PC-9 (cell line): ENCODE measurements at regions of chr11 and their contacts with region 1.

Region 1: DNA sequence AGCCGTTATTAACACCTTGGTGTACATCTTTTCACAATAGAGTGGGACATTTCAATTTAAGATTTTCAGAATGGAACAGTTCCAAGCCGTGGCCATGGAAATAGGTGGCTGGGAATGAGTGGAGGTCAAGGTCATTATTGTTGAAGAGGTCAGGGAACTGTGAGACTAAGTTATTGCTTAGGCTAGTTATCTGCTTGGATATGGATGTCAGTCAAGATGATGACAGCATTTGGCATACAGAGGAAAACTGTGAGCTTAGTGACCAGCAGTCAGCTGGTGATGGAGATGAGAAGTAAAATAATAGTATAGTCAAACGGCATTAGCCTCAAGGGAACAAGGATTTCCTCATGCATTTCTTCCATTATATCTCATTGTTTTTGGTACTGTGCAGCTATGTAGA is 52.6 kb upstream of the RCE1 start:
- DNase-seq: no peak
- H3K4me3 ChIP-seq: no peak overlapping the region
- H3K27ac ChIP-seq: no peak overlapping the region
- H3K4me1 ChIP-seq: peaks cover 32% of the 10 kb centered on the region
- H3K27me3 ChIP-seq: no peaks in the 10 kb centered on the region
- CTCF ChIP-seq: no peak

Region 2: DNA sequence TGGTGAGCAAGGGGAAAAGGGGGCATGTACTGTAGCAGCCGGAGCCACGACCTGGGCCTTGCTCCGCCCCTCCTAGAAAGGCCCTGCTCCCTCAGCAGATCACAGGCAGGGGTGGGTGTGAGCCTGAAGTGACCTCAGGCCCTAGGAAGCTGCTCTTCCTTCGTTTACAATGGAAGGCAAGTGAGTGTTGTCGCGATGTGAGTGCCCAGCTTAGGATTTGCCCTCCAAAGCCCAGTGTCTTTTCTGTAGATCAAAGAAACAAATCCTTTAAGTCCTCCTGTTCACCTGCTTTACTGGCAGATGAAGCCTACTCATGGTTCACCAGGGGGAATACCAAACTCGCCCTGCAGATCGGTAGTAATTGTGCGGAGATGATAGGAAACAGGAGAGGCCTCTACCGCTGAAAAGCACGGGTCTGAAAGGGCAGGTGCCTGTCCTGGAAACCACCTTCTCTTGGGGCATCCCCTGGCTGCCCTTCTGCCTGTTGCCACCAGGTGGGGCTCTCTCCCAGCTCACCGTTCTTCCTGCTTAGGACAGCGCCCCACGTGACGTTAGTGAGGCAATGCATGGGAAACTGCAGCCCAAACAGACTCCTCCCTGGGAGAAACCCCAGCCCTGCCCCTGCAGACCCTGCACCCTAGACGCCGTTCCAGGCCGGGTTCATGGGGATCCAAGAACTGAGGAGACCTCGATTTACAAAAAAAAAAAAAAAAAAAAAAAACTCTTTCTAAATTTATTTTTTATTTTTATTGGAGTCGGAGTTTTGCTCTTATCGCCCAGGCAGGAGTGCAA is 568.1 kb before region 1 on chr11:
- CTCF ChIA-PET with region 1: no interaction called
- POLR2A ChIA-PET with region 1: no interaction called
- intact Hi-C with region 1: no loop called
- DNase-seq: peak; percentile 86 to 90
- H3K4me3 ChIP-seq: no peak overlapping the region
- H3K27ac ChIP-seq: no peak overlapping the region
- H3K4me1 ChIP-seq: no peaks in the 10 kb centered on the region; the same call in 1 of the 2 replicates
- H3K27me3 ChIP-seq: no peaks in the 10 kb centered on the region
- CTCF ChIP-seq: peak; percentile 98

Region 3: GRCh38 chr11:66694732-66695207 is 95.9 kb before region 1 on chr11:
- CTCF ChIA-PET with region 1: no interaction called
- POLR2A ChIA-PET with region 1: no interaction called
- intact Hi-C with region 1: no loop called
- DNase-seq: peak; percentile 94 to 96
- H3K4me3 ChIP-seq: no peak overlapping the region
- H3K27ac ChIP-seq: no peak overlapping the region
- H3K4me1 ChIP-seq: no peaks in the 10 kb centered on the region
- H3K27me3 ChIP-seq: no peaks in the 10 kb centered on the region
- CTCF ChIP-seq: peak; percentile 98

Region 4: DNA sequence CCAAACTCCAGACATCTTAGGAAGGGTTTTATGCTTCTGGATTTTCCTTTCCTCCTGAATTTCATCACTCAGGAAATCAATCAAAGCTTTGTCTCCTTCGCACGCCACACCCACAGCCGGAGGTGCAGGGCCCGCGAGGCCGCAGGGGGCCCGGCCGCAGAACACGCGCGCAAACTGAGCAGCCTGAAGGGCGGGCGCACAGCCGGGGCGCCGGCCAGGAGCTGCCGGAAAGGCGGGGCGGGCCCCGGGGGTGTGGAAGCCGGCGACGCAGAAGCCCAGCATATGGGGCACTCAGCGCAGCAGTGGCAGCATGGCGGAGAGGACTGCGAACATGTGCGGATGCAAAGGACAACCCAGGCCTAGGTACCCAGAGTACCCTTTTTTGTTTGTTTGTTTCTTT is 28.6 kb before region 1 on chr11:
- CTCF ChIA-PET with region 1: no interaction called
- POLR2A ChIA-PET with region 1: no interaction called
- intact Hi-C with region 1: loop called (anchors 5 kb)
- DNase-seq: no peak
- H3K4me3 ChIP-seq: no peak overlapping the region
- H3K27ac ChIP-seq: no peak overlapping the region
- H3K4me1 ChIP-seq: no peaks in the 10 kb centered on the region
- H3K27me3 ChIP-seq: no peaks in the 10 kb centered on the region
- CTCF ChIP-seq: no peak

Region 5: GRCh38 chr11:66842501-66842895 is 51.9 kb after region 1 on chr11:
- CTCF ChIA-PET with region 1: no interaction called
- POLR2A ChIA-PET with region 1: no interaction called
- intact Hi-C with region 1: no loop called
- DNase-seq: no peak
- H3K4me3 ChIP-seq: peak overlapping the region; percentile 94
- H3K27ac ChIP-seq: peak overlapping the region; percentile 67; the same call in 1 of the 2 replicates
- H3K4me1 ChIP-seq: peaks cover 46% of the 10 kb centered on the region
- H3K27me3 ChIP-seq: no peaks in the 10 kb centered on the region
- CTCF ChIP-seq: no peak

Region 6: DNA sequence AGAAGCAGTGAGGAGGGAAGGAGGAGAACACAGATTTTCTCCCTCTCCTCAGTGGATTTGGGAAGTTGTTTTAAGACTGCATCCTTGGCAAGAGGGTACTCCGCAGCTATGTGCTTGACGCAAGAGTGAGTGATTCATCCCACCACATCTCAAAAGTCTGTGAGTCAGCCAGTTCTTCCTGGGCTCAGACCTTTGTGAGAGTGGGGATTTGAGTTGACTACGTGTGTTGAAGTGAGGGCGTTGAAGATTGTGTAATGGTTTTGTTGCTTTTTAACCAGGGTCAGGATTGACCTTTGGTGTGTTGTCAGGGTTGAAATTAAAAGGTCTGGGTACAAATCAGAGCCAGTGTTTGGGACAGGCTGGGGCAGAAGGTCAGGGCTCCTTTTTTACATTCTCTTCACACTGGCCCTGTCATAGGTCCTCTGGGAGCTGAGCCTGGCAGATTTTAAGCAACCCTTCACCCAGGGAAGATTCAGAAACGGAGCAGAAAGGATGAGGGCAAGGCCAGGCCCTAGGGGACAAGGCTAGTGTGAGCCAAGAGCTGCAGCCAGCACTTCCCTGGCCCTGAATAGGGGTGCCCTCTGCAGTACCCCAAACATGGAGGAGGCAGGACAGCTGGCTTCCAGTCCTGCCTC is 180.3 kb after region 1 on chr11:
- CTCF ChIA-PET with region 1: no interaction called
- POLR2A ChIA-PET with region 1: no interaction called
- intact Hi-C with region 1: no loop called
- DNase-seq: peak; percentile 72 to 99
- H3K4me3 ChIP-seq: peak overlapping the region; percentile 13; the same call in 1 of the 2 replicates
- H3K27ac ChIP-seq: peak overlapping the region; percentile 83
- H3K4me1 ChIP-seq: peaks cover 77% of the 10 kb centered on the region
- H3K27me3 ChIP-seq: no peaks in the 10 kb centered on the region
- CTCF ChIP-seq: no peak

Region 7: GRCh38 chr11:66987158-66987620 is 196.5 kb after region 1 on chr11:
- CTCF ChIA-PET with region 1: no interaction called
- POLR2A ChIA-PET with region 1: interaction called, 22 read pairs
- intact Hi-C with region 1: no loop called
- DNase-seq: no peak
- H3K4me3 ChIP-seq: no peak overlapping the region
- H3K27ac ChIP-seq: no peak overlapping the region
- H3K4me1 ChIP-seq: peaks cover 18% of the 10 kb centered on the region
- H3K27me3 ChIP-seq: no peaks in the 10 kb centered on the region
- CTCF ChIP-seq: no peak